Right ventricle myocardium inferior (tissue), 1 donor: ENCODE measurements at regions of chr10 and their contacts with region 1.

Region 1: DNA sequence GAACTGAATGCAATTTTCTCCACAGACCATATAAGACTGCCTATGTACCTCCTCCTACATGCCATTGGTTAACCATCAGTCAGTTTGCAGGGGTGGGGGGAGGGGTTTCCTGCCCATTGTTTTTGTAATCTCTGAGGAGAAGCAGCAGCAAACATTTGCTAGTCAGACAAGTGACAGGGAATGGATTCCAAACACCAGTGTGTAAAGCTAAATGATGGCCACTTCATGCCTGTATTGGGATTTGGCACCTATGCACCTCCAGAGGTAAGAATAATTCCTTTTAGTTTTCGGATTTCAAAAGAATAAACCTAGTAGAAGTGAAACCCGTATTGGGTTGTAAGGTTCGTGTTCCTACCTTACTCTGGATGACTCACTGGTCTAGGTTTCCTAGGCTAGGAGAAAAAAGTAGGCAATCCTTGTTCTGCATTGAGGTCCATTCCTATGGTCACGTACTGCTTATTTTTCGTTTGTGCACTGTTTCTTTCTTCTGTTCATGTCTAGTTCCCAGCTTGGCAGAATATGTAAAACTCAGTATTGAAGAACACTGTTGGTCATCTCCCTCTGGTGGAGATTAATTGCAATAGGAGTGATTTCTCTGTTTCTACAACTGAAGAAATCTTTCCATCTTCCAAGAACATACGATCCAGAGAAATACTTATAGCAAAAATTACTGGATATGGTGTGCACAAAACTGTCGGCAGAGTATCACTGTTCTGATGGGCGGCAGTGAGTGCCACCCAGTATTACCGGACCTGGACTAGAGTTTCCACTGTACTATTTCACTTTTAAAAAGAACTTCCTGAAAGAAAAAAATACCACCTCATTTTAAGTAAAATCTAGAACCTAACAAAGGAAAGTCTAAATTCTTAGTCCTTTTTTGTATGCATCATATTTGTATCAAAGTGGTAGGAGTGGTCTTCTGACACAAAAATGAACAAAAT is at the start of gene AKR1C3:
- DNase-seq: no peak
- ATAC-seq: peak; percentile 91
- total RNA-seq, gene AKR1C3: 40.5 TPM

Region 2: GRCh38 chr10:4740471-4740870 is 354.1 kb before region 1 on chr10:
- intact Hi-C with region 1: no loop called
- DNase-seq: no peak
- ATAC-seq: no peak

Region 3: GRCh38 chr10:5014936-5015335 is 79.6 kb before region 1 on chr10:
- intact Hi-C with region 1: loop called (anchors 5 kb)
- DNase-seq: no peak
- ATAC-seq: no peak

Region 4: GRCh38 chr10:5071411-5072198 is 22.9 kb before region 1 on chr10:
- intact Hi-C with region 1: loop called (anchors 2 kb)
- DNase-seq: no peak
- ATAC-seq: peak; percentile 97

Region 5: GRCh38 chr10:5283305-5284158 is 189.0 kb after region 1 on chr10:
- intact Hi-C with region 1: loop called (anchors 5 kb)
- DNase-seq: no peak
- ATAC-seq: peak; percentile 95